Activated CD8-positive, alpha-beta T cell treated with anti-CD3 and anti-CD28 coated beads for 36 hours (primary cell): ENCODE measurements at regions of chr7 and their contacts with region 1.

Region 1: GRCh38 chr7:130896898-130897514 is 163.0 kb upstream of the KLF14 start:
- DNase-seq: peak; percentile 81
- ATAC-seq: peak; percentile 64
- H3K4me3 Mint-ChIP-seq: peak overlapping the region; percentile 40
- H3K27ac Mint-ChIP-seq: peak overlapping the region; percentile 87
- H3K4me1 Mint-ChIP-seq: peaks cover 91% of the 10 kb centered on the region
- H3K27me3 Mint-ChIP-seq: no peaks in the 10 kb centered on the region
- CTCF ChIP-seq: peak; percentile 73

Region 2: GRCh38 chr7:130912862-130913631 is 16.0 kb after region 1 on chr7:
- CTCF ChIA-PET with region 1: interaction called, 96 read pairs
- POLR2A ChIA-PET with region 1: interaction called, 11 read pairs
- intact Hi-C with region 1: no loop called
- DNase-seq: peak; percentile 93
- ATAC-seq: peak; percentile 79
- H3K4me3 Mint-ChIP-seq: peak overlapping the region; percentile 87
- H3K27ac Mint-ChIP-seq: peak overlapping the region; percentile 97
- H3K4me1 Mint-ChIP-seq: peaks cover 85% of the 10 kb centered on the region
- H3K27me3 Mint-ChIP-seq: no peaks in the 10 kb centered on the region
- CTCF ChIP-seq: no peak

Region 3: DNA sequence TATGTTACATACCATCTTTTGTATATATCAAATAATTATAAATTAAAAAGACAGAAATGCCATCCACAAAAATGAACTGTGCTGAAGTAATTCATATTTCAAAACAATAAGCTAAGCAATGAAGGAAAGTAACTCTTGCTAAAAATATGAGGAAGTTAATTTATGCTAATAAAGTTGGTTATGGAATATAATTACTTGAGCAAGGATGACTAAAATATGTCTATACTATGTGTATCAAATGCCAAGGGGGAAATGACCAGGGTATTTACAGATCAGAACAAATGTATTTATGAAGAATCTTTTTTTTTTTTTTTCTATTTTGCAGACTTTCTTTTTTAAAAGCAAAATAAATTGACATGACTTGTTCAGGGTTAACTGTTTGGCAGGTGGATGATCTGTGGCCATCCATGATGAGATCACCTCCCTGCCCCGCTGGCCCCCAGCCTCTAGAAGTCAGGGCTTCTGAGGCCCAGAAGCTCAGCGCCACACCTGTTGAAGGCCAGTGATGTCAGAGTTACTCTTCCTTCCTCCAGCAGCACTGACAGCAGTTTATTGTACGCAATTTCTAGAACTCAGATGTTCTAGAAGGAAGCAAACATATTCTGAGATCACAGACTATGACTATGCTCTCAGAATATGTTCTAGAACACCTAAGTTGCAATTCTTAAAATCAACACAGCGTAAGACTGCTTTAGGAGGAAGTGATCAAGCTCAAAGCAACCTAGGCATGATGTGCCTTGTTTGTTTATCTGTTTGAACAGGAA is 33.1 kb after region 1 on chr7:
- CTCF ChIA-PET with region 1: interaction called, 20 read pairs
- POLR2A ChIA-PET with region 1: interaction called, 6 read pairs
- intact Hi-C with region 1: no loop called
- DNase-seq: no peak
- ATAC-seq: peak; percentile 20
- H3K4me3 Mint-ChIP-seq: no peak overlapping the region
- H3K27ac Mint-ChIP-seq: peak overlapping the region; percentile 73
- H3K4me1 Mint-ChIP-seq: peaks cover 82% of the 10 kb centered on the region
- H3K27me3 Mint-ChIP-seq: no peaks in the 10 kb centered on the region
- CTCF ChIP-seq: no peak

Region 4: DNA sequence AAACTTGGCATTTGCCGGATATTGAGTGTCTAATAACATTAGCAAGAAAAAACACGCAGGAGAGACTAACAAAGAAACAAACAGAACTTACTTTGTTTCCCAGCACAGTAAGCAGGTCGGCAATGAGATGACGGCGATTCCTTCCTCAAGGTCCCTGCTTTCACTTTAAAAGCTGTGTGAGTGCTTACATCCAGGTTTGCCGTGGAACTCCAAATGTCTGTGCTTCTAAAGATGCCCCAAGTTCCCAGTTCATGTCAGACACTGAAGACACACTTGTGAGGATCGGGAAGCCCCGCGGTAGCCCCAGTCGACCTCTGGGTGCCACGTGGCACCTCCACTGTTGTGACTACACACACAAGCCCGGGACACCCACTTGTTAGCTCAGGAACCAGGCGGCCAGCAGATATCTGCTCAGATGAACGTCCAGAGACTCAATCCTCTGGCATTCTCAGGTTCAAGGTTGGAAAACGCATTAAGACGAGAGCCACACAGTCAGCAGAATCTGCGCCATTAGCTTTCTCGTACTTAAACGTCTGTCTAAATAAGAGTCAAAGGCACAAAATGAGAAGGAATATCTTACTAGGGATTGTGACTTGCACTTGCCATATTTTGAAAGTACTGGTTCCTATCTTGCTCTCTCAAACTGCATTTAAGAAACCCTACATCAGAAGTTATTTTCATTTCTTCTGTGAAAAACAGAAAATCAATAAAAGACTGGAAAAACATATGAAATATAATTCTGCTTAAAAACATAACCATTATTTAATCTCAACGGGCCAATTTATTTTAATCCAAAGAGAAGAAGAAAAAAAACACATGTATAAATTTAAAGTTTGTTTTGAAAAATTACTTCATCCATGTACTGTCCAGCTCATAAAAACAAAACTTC is 44.6 kb after region 1 on chr7:
- CTCF ChIA-PET with region 1: interaction called, 30 read pairs
- POLR2A ChIA-PET with region 1: interaction called, 5 read pairs
- intact Hi-C with region 1: no loop called
- DNase-seq: no peak
- ATAC-seq: no peak
- H3K4me3 Mint-ChIP-seq: peak overlapping the region; percentile 73
- H3K27ac Mint-ChIP-seq: peak overlapping the region; percentile 86
- H3K4me1 Mint-ChIP-seq: peaks cover 87% of the 10 kb centered on the region
- H3K27me3 Mint-ChIP-seq: no peaks in the 10 kb centered on the region
- CTCF ChIP-seq: no peak